Caco-2 (cell line): ENCODE measurements at regions of chr10 and their contacts with region 1.

Region 1: GRCh38 chr10:29618341-29619171 is 16.2 kb downstream of the SVIL start:
- DNase-seq: peak; percentile 85 to 88
- H3K4me3 ChIP-seq: peak overlapping the region; percentile 20
- H3K4me3 Mint-ChIP-seq: peak overlapping the region; percentile 71
- H3K27ac Mint-ChIP-seq: peak overlapping the region; percentile 73
- H3K4me1 ChIP-seq: peaks cover 36% of the 10 kb centered on the region
- H3K4me1 Mint-ChIP-seq: peaks cover 43% of the 10 kb centered on the region
- H3K27me3 ChIP-seq: no peaks in the 10 kb centered on the region
- H3K27me3 Mint-ChIP-seq: no peaks in the 10 kb centered on the region
- CTCF ChIP-seq: no peak

Region 2: DNA sequence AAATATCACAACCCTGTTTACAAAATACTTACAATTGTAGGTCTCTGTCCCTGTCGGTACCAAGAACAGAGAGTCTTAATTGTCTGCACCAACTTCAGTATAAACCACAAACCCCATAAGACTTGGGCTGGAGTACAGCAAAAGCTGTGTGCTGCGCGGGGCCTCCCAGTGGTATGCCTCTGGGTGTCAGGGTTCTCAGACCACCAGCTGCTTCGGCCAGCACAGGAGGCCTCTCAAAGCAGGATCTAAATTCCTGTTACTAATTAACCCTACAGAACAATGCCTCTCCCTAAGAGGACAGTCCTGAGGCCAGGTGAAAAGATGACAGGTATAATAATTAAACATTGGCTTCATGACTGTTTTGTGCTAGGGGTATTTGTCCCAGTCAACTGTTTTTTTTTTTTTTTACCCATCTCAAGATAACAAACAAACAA is 17.2 kb after region 1 on chr10:
- CTCF ChIA-PET with region 1: interaction called, 11 read pairs
- POLR2A ChIA-PET with region 1: no interaction called
- intact Hi-C with region 1: loop called (anchors 2 kb)
- DNase-seq: peak; percentile 88 to 93
- H3K4me3 ChIP-seq: peak overlapping the region; percentile 23
- H3K4me3 Mint-ChIP-seq: peak overlapping the region; percentile 69
- H3K27ac Mint-ChIP-seq: peak overlapping the region; percentile 85
- H3K4me1 ChIP-seq: peaks cover 38% of the 10 kb centered on the region
- H3K4me1 Mint-ChIP-seq: peaks cover 48% of the 10 kb centered on the region
- H3K27me3 ChIP-seq: no peaks in the 10 kb centered on the region
- H3K27me3 Mint-ChIP-seq: no peaks in the 10 kb centered on the region
- CTCF ChIP-seq: peak in 1 of 2 experiments; percentile 50